PC-3 (cell line): ENCODE measurements at regions of chr21 and their contacts with region 1.

Region 1: DNA sequence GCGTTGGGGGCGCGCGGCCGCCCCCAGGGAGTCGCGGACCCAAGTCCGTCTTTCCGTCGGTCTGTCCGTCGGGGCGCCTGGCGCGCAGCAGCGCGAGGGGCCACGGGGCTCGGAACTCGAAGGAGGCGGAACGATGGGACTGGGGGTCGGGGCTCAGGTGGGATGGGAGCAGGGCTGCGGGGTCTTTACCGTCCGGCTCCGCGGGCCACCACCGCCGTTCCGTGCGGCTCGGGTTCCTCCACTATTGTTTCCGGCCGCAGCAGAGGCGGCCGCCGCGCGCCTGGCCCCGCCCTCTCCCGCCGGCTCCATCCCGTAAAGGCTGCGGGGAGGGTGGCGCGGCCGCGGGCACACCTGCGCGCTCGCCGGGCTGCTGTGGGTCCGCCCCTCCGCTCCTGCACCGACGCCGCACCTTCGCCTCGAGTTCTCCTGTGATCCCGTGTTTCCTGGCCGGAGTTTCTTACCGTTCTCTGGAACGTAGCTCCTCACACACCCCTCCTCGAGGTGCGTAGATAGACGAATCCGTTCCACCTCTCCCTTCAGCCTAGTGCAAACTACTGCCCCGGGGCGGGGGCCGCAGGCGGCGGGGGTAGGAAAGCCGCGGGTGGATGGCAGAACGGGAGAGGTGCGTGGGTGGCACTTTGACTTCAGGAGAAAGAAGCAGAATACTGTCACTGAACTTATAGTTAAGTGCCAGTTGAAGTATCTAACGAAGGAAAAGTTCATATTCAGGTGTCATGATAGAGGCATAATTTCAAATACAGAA is at the start of gene C21orf91:
- DNase-seq: peak; percentile 88
- ATAC-seq: peak; percentile 88
- H3K4me3 ChIP-seq: peak within 1 kb of the TSS; percentile 86
- H3K27ac ChIP-seq: peak within 1 kb of the TSS; percentile 63
- H3K4me1 ChIP-seq: peaks cover 17% of the 10 kb centered on the region
- H3K27me3 ChIP-seq: no peaks in the 10 kb centered on the region
- CTCF ChIP-seq: no peak
- total RNA-seq, gene C21orf91: 6.1 and 7.7 TPM in 2 replicates

Region 2: DNA sequence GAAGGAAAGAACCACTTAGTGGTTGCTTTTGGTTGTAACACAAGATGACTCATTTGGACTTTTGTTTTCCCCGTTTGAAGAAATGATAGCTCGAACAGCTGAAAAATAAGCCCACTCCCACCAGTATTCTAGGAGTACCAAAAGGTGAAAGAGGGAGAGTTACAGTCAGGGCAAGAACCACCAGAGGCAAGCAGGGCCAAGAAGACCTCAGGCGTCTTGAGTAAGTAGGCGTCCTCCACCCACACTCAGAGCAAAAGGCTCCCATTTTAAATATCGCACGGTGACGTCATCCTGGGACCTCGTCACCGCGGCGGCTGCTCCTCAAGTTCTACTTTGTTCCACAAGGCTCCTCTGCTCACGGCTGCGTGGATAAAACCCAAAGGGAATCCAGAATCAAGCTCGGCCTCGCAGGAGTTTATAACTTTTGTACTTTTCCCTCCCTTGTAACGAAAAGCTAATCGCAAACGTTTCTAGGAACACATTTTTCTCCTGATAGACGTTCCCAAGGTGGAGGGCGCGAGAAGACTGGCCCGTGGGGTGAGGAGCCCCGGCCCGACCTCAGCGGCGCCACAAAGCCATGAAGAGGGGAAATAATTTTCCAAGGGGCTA is 207.8 kb before region 1 on chr21:
- CTCF ChIA-PET with region 1: no interaction called
- POLR2A ChIA-PET with region 1: no interaction called
- intact Hi-C with region 1: loop called (anchors 1 kb)
- DNase-seq: peak; percentile 69
- ATAC-seq: peak; percentile 49
- H3K4me3 ChIP-seq: peak overlapping the region; percentile 69
- H3K27ac ChIP-seq: peak overlapping the region; percentile 12
- H3K4me1 ChIP-seq: peaks cover 21% of the 10 kb centered on the region
- H3K27me3 ChIP-seq: no peaks in the 10 kb centered on the region; the same call in 1 of the 2 replicates
- CTCF ChIP-seq: no peak

Region 3: DNA sequence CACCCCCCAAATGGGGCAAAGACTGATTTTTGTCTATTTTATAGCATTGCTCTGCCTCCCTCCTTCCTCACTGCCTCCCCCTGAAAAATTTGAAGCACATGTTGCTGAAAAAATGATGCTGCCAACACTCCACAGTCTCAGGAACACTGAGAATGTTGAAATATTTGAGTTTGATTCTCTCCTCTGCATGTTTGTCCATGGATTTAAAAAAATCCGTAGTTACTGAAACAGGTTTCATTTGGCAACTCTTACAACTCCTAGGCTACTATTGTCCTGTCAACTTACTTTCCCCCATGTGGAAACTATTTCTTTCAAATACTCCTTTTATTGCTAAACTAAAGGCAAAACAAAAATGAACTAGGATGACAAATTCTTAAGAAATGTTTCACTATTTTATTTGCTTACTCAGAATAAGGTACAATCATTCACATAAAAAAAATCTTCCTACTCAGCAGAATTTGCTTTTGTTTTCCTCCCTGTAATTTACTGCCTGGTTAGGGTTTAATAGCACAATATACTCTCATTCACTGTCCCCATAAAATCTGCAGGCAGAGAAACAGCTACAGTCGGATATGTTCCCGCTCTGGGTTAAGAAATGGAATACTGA is 50.4 kb before region 1 on chr21:
- CTCF ChIA-PET with region 1: no interaction called
- POLR2A ChIA-PET with region 1: no interaction called
- intact Hi-C with region 1: loop called (anchors 2 kb)
- DNase-seq: peak; percentile 76
- ATAC-seq: peak; percentile 92
- H3K4me3 ChIP-seq: peak overlapping the region; percentile 11; the same call in 1 of the 2 replicates
- H3K27ac ChIP-seq: no peak overlapping the region
- H3K4me1 ChIP-seq: peaks cover 13% of the 10 kb centered on the region
- H3K27me3 ChIP-seq: no peaks in the 10 kb centered on the region
- CTCF ChIP-seq: no peak